ENCODE measurements at regions of chr11 and their contacts with region 1.

Region 1: DNA sequence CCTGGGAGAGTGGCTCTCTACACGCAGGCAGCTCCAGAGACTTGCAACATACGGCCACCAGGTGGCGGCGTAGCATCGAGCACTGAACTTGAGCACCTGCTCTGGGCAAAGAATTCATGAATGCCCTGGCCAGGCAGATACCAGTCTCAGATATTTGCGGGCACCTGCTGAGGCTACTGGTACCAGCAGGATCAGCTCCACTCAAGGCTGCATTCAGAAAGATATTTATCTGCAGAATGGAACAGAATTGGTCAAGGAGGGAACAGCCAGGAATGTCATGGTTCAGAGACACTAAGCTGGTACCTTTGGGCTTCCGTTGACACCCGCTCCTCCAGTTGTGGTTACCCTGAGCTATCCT is 10.8 kb upstream of the CCDC86 start:
- DNase-seq: peak; percentile 84
- CTCF ChIP-seq: peak; percentile 96

Region 2: GRCh38 chr11:60762851-60763691 is 68.1 kb before region 1 on chr11:
- CTCF ChIA-PET with region 1: interaction called, 19 read pairs
- POLR2A ChIA-PET with region 1: no interaction called
- DNase-seq: peak; percentile 66
- CTCF ChIP-seq: peak; percentile 49

Region 3: DNA sequence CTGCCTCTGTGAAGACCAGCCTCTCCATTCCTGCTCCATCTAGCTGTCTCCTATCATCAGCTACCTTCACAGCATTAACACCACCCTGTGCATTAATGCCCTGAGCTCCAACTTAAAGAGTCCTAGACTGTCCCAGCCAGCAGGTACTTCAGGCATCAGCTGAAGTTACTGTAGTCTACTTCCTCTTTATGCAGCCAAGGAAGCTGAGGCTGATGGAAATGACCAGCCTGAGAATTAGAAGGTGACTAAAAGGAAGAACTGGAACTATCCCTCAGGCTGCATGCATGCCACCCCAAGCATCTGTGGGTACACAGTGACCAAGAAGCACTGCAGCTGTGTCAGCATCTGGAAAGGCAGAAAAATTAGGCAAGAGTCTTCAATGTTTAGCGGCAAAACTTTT is 17.8 kb before region 1 on chr11:
- CTCF ChIA-PET with region 1: interaction called, 83 read pairs
- POLR2A ChIA-PET with region 1: no interaction called
- DNase-seq: no peak
- CTCF ChIP-seq: no peak

Region 4: GRCh38 chr11:60855726-60856633 is 24.9 kb after region 1 on chr11 and contains the start of gene PTGDR2:
- CTCF ChIA-PET with region 1: interaction called, 21 read pairs
- POLR2A ChIA-PET with region 1: no interaction called
- DNase-seq: no peak
- CTCF ChIP-seq: no peak

Region 5: GRCh38 chr11:60913793-60914632 is 82.9 kb after region 1 on chr11 and contains the start of gene TMEM109:
- CTCF ChIA-PET with region 1: interaction called, 31 read pairs
- POLR2A ChIA-PET with region 1: no interaction called
- DNase-seq: peak; percentile 91
- CTCF ChIP-seq: no peak

Region 6: DNA sequence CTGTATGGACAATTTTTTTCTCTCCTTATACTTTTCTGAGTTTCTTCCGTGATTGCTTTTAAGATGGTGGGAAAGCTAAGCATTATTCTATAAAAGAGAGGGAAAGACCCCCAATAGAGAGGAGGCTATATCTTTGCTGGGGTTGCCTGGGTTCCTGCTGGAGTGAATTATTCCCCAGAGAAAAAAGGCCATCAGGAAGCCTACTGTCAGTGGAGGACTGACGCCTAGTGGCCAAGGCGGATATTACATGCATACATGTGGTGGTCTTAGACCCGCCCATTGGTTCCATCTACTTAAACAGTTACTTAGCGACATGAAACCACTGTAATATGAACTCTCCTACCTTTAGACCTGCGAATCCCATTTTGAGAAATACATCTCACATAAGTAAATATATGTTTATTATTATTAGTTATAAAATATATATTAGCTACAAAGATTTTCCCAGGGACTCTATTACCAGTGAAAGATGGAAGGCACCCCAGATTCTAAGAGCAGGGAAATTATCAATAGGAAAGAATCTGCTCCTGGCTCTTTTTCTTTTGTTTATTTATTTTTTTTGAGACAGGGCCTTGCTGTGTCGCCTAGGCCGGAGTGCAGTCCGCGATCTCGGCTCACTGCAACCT is 356.5 kb after region 1 on chr11:
- CTCF ChIA-PET with region 1: interaction called, 39 read pairs
- POLR2A ChIA-PET with region 1: no interaction called
- DNase-seq: peak; percentile 82
- CTCF ChIP-seq: peak; percentile 87